ENCODE measurements at regions of chr12 and their contacts with region 1.

Region 1: GRCh38 chr12:976644-977043 is 14.4 kb upstream of the ERC1 start:
- DNase-seq: no peak
- H3K4me3 ChIP-seq: no peak overlapping the region
- H3K27me3 ChIP-seq: no peaks in the 10 kb centered on the region
- CTCF ChIP-seq: no peak

Region 2: DNA sequence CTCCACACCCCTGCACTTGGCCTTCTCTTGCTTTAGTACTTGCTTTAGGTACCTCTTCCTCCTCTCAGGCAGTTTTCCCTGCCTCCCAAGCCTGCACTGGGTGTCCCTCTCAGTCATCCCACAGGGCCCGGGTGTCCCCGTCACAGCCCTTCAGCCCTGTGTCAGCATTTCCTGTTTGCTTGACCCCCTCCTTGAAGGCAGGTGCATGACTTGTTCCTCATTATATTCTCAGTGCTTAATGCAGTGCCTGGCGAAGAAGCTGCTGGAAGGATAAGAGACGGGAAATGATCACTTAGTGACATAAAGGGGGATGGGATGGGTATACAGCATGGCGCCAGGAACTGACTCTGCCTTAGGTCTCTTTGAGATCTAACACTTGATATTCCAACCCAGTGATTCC is 848.6 kb before region 1 on chr12:
- CTCF ChIA-PET with region 1: no interaction called
- POLR2A ChIA-PET with region 1: no interaction called
- DNase-seq: no peak
- H3K4me3 ChIP-seq: no peak overlapping the region
- H3K27me3 ChIP-seq: peaks cover 2% of the 10 kb centered on the region
- CTCF ChIP-seq: no peak

Region 3: GRCh38 chr12:1130571-1130970 is 153.9 kb after region 1 on chr12:
- CTCF ChIA-PET with region 1: no interaction called
- POLR2A ChIA-PET with region 1: interaction called, 12 read pairs
- DNase-seq: no peak
- H3K4me3 ChIP-seq: no peak overlapping the region
- H3K27me3 ChIP-seq: no peaks in the 10 kb centered on the region
- CTCF ChIP-seq: no peak

Measured in BJ (cell line).